Activated T-helper 1 cell treated with anti-CD3 and anti-CD28 coated beads, Interleukin-12 subunit alpha, Interleukin-12 subunit beta, Interleukin-2, Interleukin-4 antibody, amounts not matched to agents 30 ng/mL and 10 ng/mL and 1 ng/mL, durations not matched to agents 14 hours and 24 hours and 36 hours (primary cell): ENCODE measurements at regions of chr1 and their contacts with region 1.

Region 1: DNA sequence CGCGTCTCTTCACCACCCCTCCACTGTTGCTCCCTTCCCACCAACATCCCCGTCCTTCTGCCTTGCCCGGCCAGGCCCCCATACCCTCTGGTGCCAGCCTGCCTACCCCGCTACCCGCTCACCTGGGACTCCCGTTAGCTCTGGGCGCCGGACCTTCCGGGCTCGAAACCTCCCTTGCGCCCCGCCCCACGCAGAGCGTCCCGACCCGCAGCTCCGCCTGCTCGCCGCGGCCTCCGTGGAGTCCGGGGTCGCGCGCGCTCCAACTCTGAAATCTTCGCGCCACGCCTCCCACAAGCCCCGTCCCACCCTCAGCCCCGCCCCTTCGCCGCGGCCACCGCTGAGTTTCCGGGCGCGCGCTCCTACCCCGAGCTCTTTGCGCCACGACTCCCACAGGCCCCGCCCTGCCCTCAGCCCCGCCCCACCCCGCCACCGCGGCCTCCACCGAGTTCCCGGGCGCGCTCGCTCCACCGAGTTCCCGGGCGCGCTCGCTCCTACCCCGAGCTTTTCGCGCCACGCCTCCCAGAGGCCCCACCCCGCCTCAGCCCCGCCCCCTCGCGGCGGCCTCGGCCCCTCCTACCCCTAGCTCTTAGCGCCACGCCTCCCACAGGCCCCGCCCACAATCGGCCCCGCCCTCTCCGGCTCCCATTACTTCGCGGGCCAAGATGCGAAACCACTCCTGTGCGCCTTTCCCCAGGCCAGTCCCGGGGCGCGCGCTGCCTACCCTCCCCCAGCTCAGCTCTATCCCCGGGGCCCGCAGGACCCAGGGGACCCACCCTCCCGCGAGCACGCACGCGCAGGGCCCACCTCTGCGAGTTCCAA is at the start of gene IFT25:
- DNase-seq: peak; percentile 95
- H3K4me3 Mint-ChIP-seq: peak within 1 kb of the TSS; percentile 90
- H3K27ac Mint-ChIP-seq: peak within 1 kb of the TSS; percentile 89
- H3K4me1 Mint-ChIP-seq: peaks cover 61% of the 10 kb centered on the region
- H3K27me3 Mint-ChIP-seq: no peaks in the 10 kb centered on the region
- total RNA-seq, gene IFT25: 50.2 and 52.6 TPM in 2 replicates

Region 2: GRCh38 chr1:53413175-53414001 is 532.3 kb before region 1 on chr1:
- intact Hi-C with region 1: loop called (anchors 2 kb)
- DNase-seq: peak; percentile 73
- H3K4me3 Mint-ChIP-seq: peak overlapping the region; percentile 68
- H3K27ac Mint-ChIP-seq: peak overlapping the region; percentile 95
- H3K4me1 Mint-ChIP-seq: peaks cover 86% of the 10 kb centered on the region
- H3K27me3 Mint-ChIP-seq: no peaks in the 10 kb centered on the region

Region 3: GRCh38 chr1:53860967-53861411 is 84.7 kb before region 1 on chr1:
- intact Hi-C with region 1: loop called (anchors 1 kb)
- DNase-seq: peak; percentile 18
- H3K4me3 Mint-ChIP-seq: no peak overlapping the region
- H3K27ac Mint-ChIP-seq: no peak overlapping the region
- H3K4me1 Mint-ChIP-seq: no peaks in the 10 kb centered on the region
- H3K27me3 Mint-ChIP-seq: no peaks in the 10 kb centered on the region

Region 4: DNA sequence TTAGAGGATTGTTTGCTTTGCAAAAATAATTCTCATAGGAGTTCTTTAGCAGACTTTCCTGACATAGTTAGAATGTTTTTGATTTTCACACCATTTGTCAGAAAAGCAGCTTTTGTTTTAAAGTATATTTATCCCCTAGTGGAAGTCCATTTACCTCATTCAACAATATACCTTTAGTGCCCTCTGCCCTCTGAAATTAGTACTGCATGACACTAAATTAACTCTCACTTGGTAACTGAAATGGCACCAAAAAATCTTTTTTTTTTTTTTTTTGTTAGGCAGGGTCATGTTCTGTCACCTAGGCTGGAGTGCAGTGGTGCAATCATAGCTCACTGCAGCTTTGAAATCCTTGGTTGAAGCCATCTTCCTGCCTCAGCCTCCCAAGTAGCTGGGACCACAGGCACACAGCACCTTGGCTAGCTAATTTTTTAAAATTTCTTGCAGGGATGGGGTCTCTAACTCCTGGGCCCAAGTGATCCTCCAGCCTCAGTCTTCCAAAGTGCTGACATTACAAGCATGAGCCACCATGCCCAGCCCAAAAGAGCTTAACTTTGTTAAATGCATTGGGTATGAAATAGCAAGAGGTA is 14.1 kb after region 1 on chr1:
- intact Hi-C with region 1: loop called (anchors 1 kb)
- DNase-seq: no peak
- H3K4me3 Mint-ChIP-seq: no peak overlapping the region
- H3K27ac Mint-ChIP-seq: no peak overlapping the region
- H3K4me1 Mint-ChIP-seq: peaks cover 13% of the 10 kb centered on the region
- H3K27me3 Mint-ChIP-seq: no peaks in the 10 kb centered on the region

Region 5: DNA sequence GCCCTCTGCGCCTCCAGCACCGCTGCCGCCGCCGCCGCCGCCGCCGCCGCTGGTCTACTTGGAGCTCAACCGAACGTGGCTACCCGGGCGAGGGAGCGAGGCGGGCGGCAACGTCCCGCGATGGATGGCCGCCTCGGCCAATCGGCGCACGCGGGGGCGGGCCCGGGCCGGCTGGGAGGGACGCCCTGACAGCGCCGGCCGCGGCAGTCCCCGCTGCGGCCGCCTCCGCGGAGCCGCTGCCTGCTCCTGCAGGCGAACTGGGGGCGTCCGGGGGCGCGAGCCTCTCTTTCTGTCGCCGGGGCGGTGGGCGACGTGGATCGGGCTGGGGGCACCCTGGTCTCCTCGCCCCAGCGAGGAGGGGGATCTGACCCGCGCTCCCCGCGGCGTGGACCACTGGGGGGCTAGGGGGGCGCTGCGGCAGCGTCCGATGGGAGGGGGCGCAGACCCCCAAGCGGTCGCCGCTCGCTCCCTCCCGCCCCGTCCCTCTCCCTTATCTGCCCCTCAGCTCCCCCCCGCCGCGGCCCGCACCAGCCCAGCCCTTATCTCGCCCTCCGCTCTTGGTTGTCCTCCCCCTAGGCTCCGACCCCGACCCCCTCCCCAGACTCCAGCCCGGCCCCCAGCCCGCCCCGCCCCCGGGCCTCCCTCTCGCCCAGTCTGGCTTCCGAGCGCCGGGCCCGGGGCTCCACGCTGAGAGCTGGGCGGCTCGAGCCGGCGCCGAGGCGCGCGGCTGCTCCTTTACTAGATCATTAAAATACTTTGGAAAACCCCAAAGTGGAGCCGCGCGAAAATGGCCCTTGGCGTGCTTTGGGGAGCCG is 460.9 kb after region 1 on chr1 and contains the start of gene SSBP3:
- intact Hi-C with region 1: loop called (anchors 5 kb)
- DNase-seq: peak; percentile 91
- H3K4me3 Mint-ChIP-seq: peak within 1 kb of the TSS; percentile 88
- H3K27ac Mint-ChIP-seq: peak within 1 kb of the TSS; percentile 83
- H3K4me1 Mint-ChIP-seq: peaks cover 72% of the 10 kb centered on the region
- H3K27me3 Mint-ChIP-seq: no peaks in the 10 kb centered on the region
- total RNA-seq, gene SSBP3: 98.0 and 110 TPM in 2 replicates